GM12878 (cell line): ENCODE measurements at regions of chr5 and their contacts with region 1.

Region 1: GRCh38 chr5:59007460-59008063 is 424.7 kb downstream of the RAB3C start:
- DNase-seq: no peak
- ATAC-seq: peak; percentile 57
- H3K4me3 ChIP-seq: no peak overlapping the region
- H3K27ac ChIP-seq: no peak overlapping the region
- H3K4me1 ChIP-seq: no peaks in the 10 kb centered on the region
- H3K27me3 ChIP-seq: no peaks in the 10 kb centered on the region
- CTCF ChIP-seq: peak in 1 of 3 experiments; percentile 20; a peak in 1 of 6 replicates
- EP300 ChIP-seq: no peak
- POLR2A ChIP-seq: no peak
- RAD21 ChIP-seq: peak; percentile 62

Region 2: GRCh38 chr5:58871648-58872242 is 135.8 kb before region 1 on chr5:
- CTCF ChIA-PET with region 1: interaction called, 12 read pairs
- POLR2A ChIA-PET with region 1: no interaction called
- RAD21 ChIA-PET with region 1: interaction called, 6 read pairs
- SMC1A ChIA-PET with region 1: interaction called, 16 read pairs
- in situ Hi-C with region 1: no loop called
- intact Hi-C with region 1: loop called (anchors 5 kb)
- DNase-seq: no peak
- ATAC-seq: peak; percentile 79
- H3K4me3 ChIP-seq: no peak overlapping the region
- H3K27ac ChIP-seq: no peak overlapping the region
- H3K4me1 ChIP-seq: no peaks in the 10 kb centered on the region
- H3K27me3 ChIP-seq: no peaks in the 10 kb centered on the region
- CTCF ChIP-seq: peak; percentile 46 to 53 (median 49); a peak in 5 of 6 replicates
- EP300 ChIP-seq: no peak
- POLR2A ChIP-seq: no peak
- RAD21 ChIP-seq: peak; percentile 33

Region 3: GRCh38 chr5:58902765-58903164 is 104.8 kb before region 1 on chr5:
- CTCF ChIA-PET with region 1: interaction called, 10 read pairs
- POLR2A ChIA-PET with region 1: no interaction called
- RAD21 ChIA-PET with region 1: interaction called, 9 read pairs
- SMC1A ChIA-PET with region 1: no interaction called
- in situ Hi-C with region 1: no loop called
- intact Hi-C with region 1: no loop called
- DNase-seq: no peak
- ATAC-seq: no peak
- H3K4me3 ChIP-seq: no peak overlapping the region
- H3K27ac ChIP-seq: no peak overlapping the region
- H3K4me1 ChIP-seq: no peaks in the 10 kb centered on the region
- H3K27me3 ChIP-seq: no peaks in the 10 kb centered on the region; a peak in 2 of 4 replicates
- CTCF ChIP-seq: no peak
- EP300 ChIP-seq: no peak
- POLR2A ChIP-seq: no peak
- RAD21 ChIP-seq: no peak

Region 4: DNA sequence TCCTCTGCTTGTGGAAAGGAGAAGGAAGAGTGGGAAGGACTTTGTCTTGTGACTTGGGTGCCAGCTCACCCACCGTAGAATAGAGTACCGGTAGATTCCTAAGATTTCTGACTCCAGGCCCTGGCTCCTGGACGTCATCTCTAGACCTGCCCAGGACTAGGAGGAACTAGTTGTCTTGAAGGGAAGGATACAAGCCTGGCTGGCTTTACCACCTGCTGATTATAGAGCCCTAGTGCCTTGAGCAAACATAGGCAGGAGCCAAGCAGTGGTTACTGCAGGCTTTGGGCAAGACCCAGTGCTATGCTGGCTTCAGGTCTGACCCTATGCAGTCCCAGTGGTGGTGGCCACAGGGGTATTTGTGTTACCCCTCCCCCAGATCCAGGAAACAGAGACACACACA is 279.8 kb after region 1 on chr5:
- CTCF ChIA-PET with region 1: no interaction called
- POLR2A ChIA-PET with region 1: no interaction called
- RAD21 ChIA-PET with region 1: no interaction called
- SMC1A ChIA-PET with region 1: no interaction called
- in situ Hi-C with region 1: no loop called
- intact Hi-C with region 1: no loop called
- DNase-seq: no peak
- ATAC-seq: no peak
- H3K4me3 ChIP-seq: no peak overlapping the region
- H3K27ac ChIP-seq: no peak overlapping the region
- H3K4me1 ChIP-seq: no peaks in the 10 kb centered on the region
- H3K27me3 ChIP-seq: no peaks in the 10 kb centered on the region
- CTCF ChIP-seq: no peak
- EP300 ChIP-seq: no peak
- POLR2A ChIP-seq: no peak
- RAD21 ChIP-seq: no peak

Region 5: GRCh38 chr5:59460368-59461153 is 453.0 kb after region 1 on chr5:
- CTCF ChIA-PET with region 1: no interaction called
- POLR2A ChIA-PET with region 1: no interaction called
- RAD21 ChIA-PET with region 1: no interaction called
- SMC1A ChIA-PET with region 1: no interaction called
- in situ Hi-C with region 1: no loop called
- intact Hi-C with region 1: no loop called
- DNase-seq: no peak
- ATAC-seq: no peak
- H3K4me3 ChIP-seq: no peak overlapping the region
- H3K27ac ChIP-seq: no peak overlapping the region
- H3K4me1 ChIP-seq: no peaks in the 10 kb centered on the region
- H3K27me3 ChIP-seq: no peaks in the 10 kb centered on the region
- CTCF ChIP-seq: no peak
- EP300 ChIP-seq: no peak
- POLR2A ChIP-seq: no peak
- RAD21 ChIP-seq: no peak